Naive thymus-derived CD4-positive, alpha-beta T cell (primary cell): ENCODE measurements at regions of chr19 and their contacts with region 1.

Region 1: GRCh38 chr19:51986309-51987291 is at the start of gene ZNF350:
- DNase-seq: peak; percentile 61 to 94 (median 89)
- ATAC-seq: peak; percentile 100
- H3K4me3 ChIP-seq: peak within 1 kb of the TSS; percentile 89
- H3K4me3 Mint-ChIP-seq: peak within 1 kb of the TSS; percentile 93 to 99 (median 96)
- H3K27ac ChIP-seq: peak within 1 kb of the TSS; percentile 82
- H3K27ac Mint-ChIP-seq: peak within 1 kb of the TSS; percentile 91 to 98 (median 94)
- H3K4me1 ChIP-seq: peaks cover 6 to 10% of the 10 kb centered on the region in 2 donors
- H3K4me1 Mint-ChIP-seq: peaks cover 10 to 33% (median 20%) of the 10 kb centered on the region in 7 donors
- H3K27me3 ChIP-seq: no peaks in the 10 kb centered on the region
- H3K27me3 Mint-ChIP-seq: no peaks in the 10 kb centered on the region
- total RNA-seq, gene ZNF350: 18.1 to 43.7 (median 36.0) TPM

Region 2: GRCh38 chr19:51441410-51442390 is 544.9 kb before region 1 on chr19:
- CTCF ChIA-PET with region 1: no interaction called
- POLR2A ChIA-PET with region 1: no interaction called
- intact Hi-C with region 1: no loop called
- DNase-seq: peak; percentile 27 to 87 (median 68)
- ATAC-seq: peak; percentile 91
- H3K4me3 ChIP-seq: peak overlapping the region; percentile 31
- H3K4me3 Mint-ChIP-seq: peak overlapping the region; percentile 74 to 92 (median 83)
- H3K27ac ChIP-seq: peak overlapping the region; percentile 53
- H3K27ac Mint-ChIP-seq: peak overlapping the region; percentile 49 to 88 (median 77)
- H3K4me1 ChIP-seq: peaks cover 22 to 24% of the 10 kb centered on the region in 2 donors
- H3K4me1 Mint-ChIP-seq: peaks cover 22 to 43% (median 34%) of the 10 kb centered on the region in 7 donors
- H3K27me3 ChIP-seq: peaks cover 0 to 4% of the 10 kb centered on the region in 2 donors
- H3K27me3 Mint-ChIP-seq: peaks cover 0 to 59% (median 5%) of the 10 kb centered on the region in 5 donors

Region 3: GRCh38 chr19:51873097-51873496 is 113.5 kb before region 1 on chr19:
- CTCF ChIA-PET with region 1: no interaction called
- POLR2A ChIA-PET with region 1: no interaction called
- intact Hi-C with region 1: no loop called
- DNase-seq: no peak
- ATAC-seq: no peak
- H3K4me3 ChIP-seq: peak overlapping the region; percentile 13
- H3K4me3 Mint-ChIP-seq: no peak overlapping the region
- H3K27ac ChIP-seq: no peak overlapping the region
- H3K27ac Mint-ChIP-seq: no peak overlapping the region
- H3K4me1 ChIP-seq: no peaks in the 10 kb centered on the region
- H3K4me1 Mint-ChIP-seq: peaks cover 0 to 10% (median 0%) of the 10 kb centered on the region in 7 donors
- H3K27me3 ChIP-seq: no peaks in the 10 kb centered on the region
- H3K27me3 Mint-ChIP-seq: no peaks in the 10 kb centered on the region

Region 4: GRCh38 chr19:51904331-51905165 is 82.1 kb before region 1 on chr19 and contains the start of gene ZNF649:
- CTCF ChIA-PET with region 1: no interaction called
- POLR2A ChIA-PET with region 1: no interaction called
- intact Hi-C with region 1: loop called (anchors 1 kb)
- DNase-seq: peak; percentile 67 to 84 (median 74)
- ATAC-seq: peak; percentile 98
- H3K4me3 ChIP-seq: peak within 1 kb of the TSS; percentile 84
- H3K4me3 Mint-ChIP-seq: peak within 1 kb of the TSS; percentile 87 to 100 (median 99)
- H3K27ac ChIP-seq: peak within 1 kb of the TSS; percentile 84
- H3K27ac Mint-ChIP-seq: peak within 1 kb of the TSS; percentile 89 to 99 (median 97)
- H3K4me1 ChIP-seq: peaks cover 0 to 5% of the 10 kb centered on the region in 2 donors
- H3K4me1 Mint-ChIP-seq: peaks cover 8 to 33% (median 28%) of the 10 kb centered on the region in 7 donors
- H3K27me3 ChIP-seq: no peaks in the 10 kb centered on the region
- H3K27me3 Mint-ChIP-seq: peaks cover 0 to 31% (median 19%) of the 10 kb centered on the region in 5 donors
- total RNA-seq, gene ZNF649: 11.1 to 33.4 (median 14.5) TPM

Region 5: DNA sequence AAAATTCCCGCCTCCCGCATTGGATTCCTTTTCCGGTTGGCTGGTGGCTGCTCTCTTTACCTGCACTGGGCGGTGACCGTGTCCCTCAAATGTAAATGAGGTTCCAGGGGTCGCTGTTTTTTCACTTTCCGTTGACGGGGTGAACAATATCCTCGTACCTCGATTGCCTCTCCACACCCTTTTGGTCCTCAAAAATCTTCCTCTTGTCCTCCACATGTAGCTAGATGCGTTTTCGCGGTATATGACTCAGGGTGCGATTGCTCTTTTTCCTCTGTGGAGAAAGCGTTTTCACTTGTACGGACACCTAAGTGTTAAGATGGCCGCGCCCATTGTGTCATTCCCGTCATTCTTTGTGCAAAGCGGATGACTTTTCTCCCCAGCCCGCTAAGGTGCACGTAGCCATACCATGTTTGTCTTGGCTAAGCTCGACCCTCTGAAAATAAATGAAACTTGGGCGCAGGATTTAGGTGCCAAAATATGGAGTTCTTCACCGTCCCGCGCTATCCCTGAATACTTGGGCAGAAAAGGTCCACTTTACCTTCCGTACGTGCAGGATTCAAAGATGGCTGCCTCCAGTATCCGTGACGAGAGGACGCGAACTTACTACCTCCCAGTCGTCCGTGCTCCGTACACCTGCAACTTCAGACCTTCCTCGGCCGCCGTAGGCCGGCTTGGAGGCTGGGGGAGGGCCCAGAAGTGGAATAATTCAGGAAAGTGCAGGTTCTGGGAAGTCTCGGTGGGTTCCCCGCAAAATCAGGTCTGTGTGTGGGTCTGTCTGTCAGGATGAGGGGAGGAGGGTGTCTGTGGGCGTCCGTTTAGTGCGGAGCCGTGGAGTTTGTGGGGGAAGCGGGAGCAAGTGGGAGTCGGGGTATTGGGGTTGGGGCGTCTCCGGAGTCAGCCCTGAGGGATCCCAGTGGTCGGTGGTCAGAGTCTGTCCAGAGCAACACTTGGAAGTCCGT is 59.5 kb before region 1 on chr19 and contains the start of gene ZNF613:
- CTCF ChIA-PET with region 1: no interaction called
- POLR2A ChIA-PET with region 1: interaction called, 4 read pairs
- intact Hi-C with region 1: loop called (anchors 1 kb)
- DNase-seq: peak; percentile 65 to 87 (median 83)
- ATAC-seq: peak; percentile 92
- H3K4me3 ChIP-seq: peak within 1 kb of the TSS; percentile 70
- H3K4me3 Mint-ChIP-seq: peak within 1 kb of the TSS; percentile 90 to 100 (median 97)
- H3K27ac ChIP-seq: peak within 1 kb of the TSS; percentile 77
- H3K27ac Mint-ChIP-seq: peak within 1 kb of the TSS; percentile 87 to 96 (median 92)
- H3K4me1 ChIP-seq: peaks cover 4% of the 10 kb centered on the region in 2 donors
- H3K4me1 Mint-ChIP-seq: peaks cover 19 to 41% (median 36%) of the 10 kb centered on the region in 7 donors
- H3K27me3 ChIP-seq: no peaks in the 10 kb centered on the region
- H3K27me3 Mint-ChIP-seq: no peaks in the 10 kb centered on the region
- total RNA-seq, gene ZNF613: 1.5 to 9.6 (median 5.2) TPM

Region 6: GRCh38 chr19:52007806-52008557 is 21.4 kb after region 1 on chr19 and contains the start of gene ZNF615:
- CTCF ChIA-PET with region 1: no interaction called
- POLR2A ChIA-PET with region 1: interaction called, 3 read pairs
- intact Hi-C with region 1: loop called (anchors 1 kb)
- DNase-seq: peak; percentile 80 to 96 (median 85)
- ATAC-seq: peak; percentile 97
- H3K4me3 ChIP-seq: peak within 1 kb of the TSS; percentile 89
- H3K4me3 Mint-ChIP-seq: peak within 1 kb of the TSS; percentile 92 to 98 (median 98)
- H3K27ac ChIP-seq: peak within 1 kb of the TSS; percentile 83
- H3K27ac Mint-ChIP-seq: peak within 1 kb of the TSS; percentile 91 to 99 (median 95)
- H3K4me1 ChIP-seq: peaks cover 7% of the 10 kb centered on the region in 2 donors
- H3K4me1 Mint-ChIP-seq: peaks cover 15 to 33% (median 21%) of the 10 kb centered on the region in 7 donors
- H3K27me3 ChIP-seq: no peaks in the 10 kb centered on the region
- H3K27me3 Mint-ChIP-seq: no peaks in the 10 kb centered on the region
- total RNA-seq, gene ZNF615: 8.7 to 20.9 (median 11.0) TPM

Region 7: GRCh38 chr19:52095172-52096014 is 108.8 kb after region 1 on chr19 and contains the start of gene ZNF841:
- CTCF ChIA-PET with region 1: no interaction called
- POLR2A ChIA-PET with region 1: no interaction called
- intact Hi-C with region 1: loop called in 1 of 2 experiments (anchors 1 kb)
- DNase-seq: peak; percentile 64 to 84 (median 75)
- ATAC-seq: peak; percentile 98
- H3K4me3 ChIP-seq: peak within 1 kb of the TSS; percentile 86
- H3K4me3 Mint-ChIP-seq: peak within 1 kb of the TSS; percentile 87 to 99 (median 96)
- H3K27ac ChIP-seq: peak within 1 kb of the TSS; percentile 81
- H3K27ac Mint-ChIP-seq: peak within 1 kb of the TSS; percentile 62 to 99 (median 94)
- H3K4me1 ChIP-seq: peaks cover 0 to 9% of the 10 kb centered on the region in 2 donors
- H3K4me1 Mint-ChIP-seq: peaks cover 24 to 47% (median 39%) of the 10 kb centered on the region in 7 donors
- H3K27me3 ChIP-seq: no peaks in the 10 kb centered on the region
- H3K27me3 Mint-ChIP-seq: no peaks in the 10 kb centered on the region
- total RNA-seq, gene ZNF841: 22.6 to 43.5 (median 27.5) TPM